ENCODE measurements at regions of chr10 and their contacts with region 1.

Region 1: DNA sequence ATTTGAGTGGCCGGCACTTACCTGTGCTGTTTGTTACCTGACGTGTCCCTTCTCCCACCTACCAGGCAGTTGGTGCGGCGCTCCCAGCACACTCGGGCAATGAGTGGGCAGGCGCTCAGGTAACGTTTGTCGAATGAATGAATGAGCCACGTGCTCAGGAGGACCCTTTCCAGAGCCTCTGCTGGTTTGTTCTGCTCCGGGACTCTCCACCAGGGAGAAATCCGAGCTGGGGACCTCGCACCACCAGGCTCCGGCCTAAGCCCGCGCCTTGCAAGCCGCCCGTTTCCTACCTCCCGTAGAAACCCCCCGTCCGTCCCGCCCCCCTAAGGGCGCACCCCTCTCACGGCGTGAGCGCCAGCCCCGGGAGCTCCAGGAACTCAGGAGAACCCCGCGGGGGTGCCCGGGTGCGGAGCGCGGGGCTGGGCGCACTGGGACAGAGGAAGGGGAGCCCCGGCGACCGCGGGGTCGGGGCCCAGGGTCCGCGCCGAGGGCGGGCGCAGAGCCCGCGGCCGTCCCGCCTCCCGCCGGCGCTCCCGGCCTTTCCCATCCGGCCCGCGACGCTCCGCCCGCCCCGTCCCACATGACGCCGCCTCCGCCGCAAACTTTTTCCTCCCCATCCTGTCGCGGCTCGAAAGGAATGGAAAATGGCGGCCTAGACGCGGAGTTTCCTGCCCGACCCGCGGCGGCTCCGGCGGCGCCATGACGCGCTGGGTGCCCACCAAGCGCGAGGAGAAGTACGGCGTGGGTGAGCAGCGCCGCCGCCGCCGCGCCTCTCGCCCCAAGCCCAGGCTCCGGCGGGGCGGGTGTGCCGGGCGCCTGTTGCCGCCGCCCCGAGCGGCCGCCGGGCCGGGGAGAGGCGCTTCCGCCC is at the start of gene DOCK1:
- DNase-seq: peak in 39 of 42 donors; percentile 54 to 88 (median 73)

Region 2: DNA sequence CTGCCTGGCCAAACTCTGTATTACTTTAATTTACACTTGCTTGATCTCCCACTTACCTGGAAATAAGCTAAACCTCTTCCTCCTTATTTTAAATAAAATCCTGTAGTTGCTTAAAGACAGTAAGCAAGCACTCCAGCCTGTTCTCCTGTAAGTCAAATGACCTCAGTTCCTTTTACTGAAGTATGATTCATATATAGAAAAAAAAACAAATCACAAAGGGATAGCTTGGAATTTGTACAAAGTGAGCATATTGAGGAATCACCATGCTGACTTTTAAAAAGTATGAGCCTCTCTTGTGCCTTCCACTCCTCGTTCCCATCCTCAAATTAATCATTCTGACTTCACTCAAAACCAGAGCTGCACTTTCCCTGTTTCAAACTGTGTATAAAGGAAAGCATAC is 286.6 kb before region 1 on chr10:
- intact Hi-C with region 1: no loop called
- DNase-seq: no peak

Region 3: DNA sequence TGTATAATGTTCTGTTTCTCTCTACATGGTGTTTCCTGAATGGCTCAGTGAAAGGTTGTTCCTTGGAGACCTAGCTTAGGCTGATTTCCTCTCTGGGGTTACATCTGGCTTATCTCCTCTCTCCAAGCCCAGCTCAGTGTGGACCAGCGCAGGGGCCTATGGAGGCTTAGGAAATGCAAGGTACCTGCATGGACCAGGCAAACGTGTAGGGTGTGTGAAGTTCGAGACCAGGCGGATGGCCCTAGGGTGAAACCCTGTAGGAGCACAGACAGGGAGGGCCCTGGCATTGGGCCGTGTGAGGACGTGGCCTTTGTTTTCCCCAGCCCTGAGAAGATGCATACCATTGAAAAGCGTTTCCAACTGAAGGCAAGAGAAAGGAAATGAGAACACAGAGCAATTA is 59.1 kb after region 1 on chr10:
- intact Hi-C with region 1: loop called (anchors 5 kb)
- DNase-seq: peak in 1 of 42 donors; percentile 64

Region 4: GRCh38 chr10:126993235-126993634 is 88.2 kb after region 1 on chr10:
- intact Hi-C with region 1: no loop called
- DNase-seq: no peak